ENCODE measurements at regions of chr10 and their contacts with region 1.

Region 1: DNA sequence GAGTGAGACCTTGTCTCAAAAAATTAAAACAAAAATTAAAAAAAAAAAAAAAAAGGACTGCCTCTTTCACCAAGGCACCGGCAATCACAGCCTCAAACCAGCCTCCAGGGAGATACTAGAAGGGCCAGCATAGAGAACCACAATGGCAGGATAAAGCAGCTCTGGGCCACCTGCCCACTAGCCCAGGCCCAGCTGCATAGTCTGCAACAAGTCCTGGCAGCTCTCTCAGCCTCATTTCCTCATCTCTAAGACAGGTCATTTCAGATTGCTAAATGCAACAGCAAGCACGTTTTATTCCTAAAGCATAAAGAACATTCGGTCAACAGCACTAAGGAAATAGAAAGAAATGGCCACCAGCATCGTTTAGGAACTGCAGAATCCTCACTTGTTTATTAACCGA is 28.8 kb downstream of the XPNPEP1 start:
- DNase-seq: no peak
- ATAC-seq: no peak
- H3K4me3 ChIP-seq: no peak overlapping the region
- H3K4me3 Mint-ChIP-seq: no peak overlapping the region
- H3K27ac ChIP-seq: no peak overlapping the region
- H3K27ac Mint-ChIP-seq: no peak overlapping the region
- H3K4me1 ChIP-seq: peaks cover 4% of the 10 kb centered on the region
- H3K4me1 Mint-ChIP-seq: peaks cover 56% of the 10 kb centered on the region
- H3K27me3 ChIP-seq: no peaks in the 10 kb centered on the region
- H3K27me3 Mint-ChIP-seq: no peaks in the 10 kb centered on the region
- CTCF ChIP-seq: no peak

Region 2: GRCh38 chr10:109934958-109935706 is 40.6 kb after region 1 on chr10:
- CTCF ChIA-PET with region 1: interaction called, 6 read pairs
- POLR2A ChIA-PET with region 1: interaction called, 3 read pairs
- intact Hi-C with region 1: loop called in 1 of 2 experiments (anchors 5 kb)
- DNase-seq: peak in 4 of 9 experiments; percentile 15 to 56 (median 36)
- ATAC-seq: peak; percentile 32
- H3K4me3 ChIP-seq: peak overlapping the region in 1 of 2 experiments; percentile 2
- H3K4me3 Mint-ChIP-seq: peak overlapping the region; percentile 77
- H3K27ac ChIP-seq: peak overlapping the region; percentile 33 to 70
- H3K27ac Mint-ChIP-seq: peak overlapping the region; percentile 96
- H3K4me1 ChIP-seq: peaks cover 68% of the 10 kb centered on the region
- H3K4me1 Mint-ChIP-seq: peaks cover 74% of the 10 kb centered on the region
- H3K27me3 ChIP-seq: no peaks in the 10 kb centered on the region
- H3K27me3 Mint-ChIP-seq: no peaks in the 10 kb centered on the region
- CTCF ChIP-seq: no peak

Region 3: GRCh38 chr10:110110338-110110737 is 215.8 kb after region 1 on chr10:
- CTCF ChIA-PET with region 1: no interaction called
- POLR2A ChIA-PET with region 1: no interaction called
- intact Hi-C with region 1: loop called in 1 of 2 experiments (anchors 5 kb)
- DNase-seq: peak in 2 of 9 experiments; percentile 7 to 14
- ATAC-seq: no peak
- H3K4me3 ChIP-seq: no peak overlapping the region
- H3K4me3 Mint-ChIP-seq: no peak overlapping the region
- H3K27ac ChIP-seq: no peak overlapping the region
- H3K27ac Mint-ChIP-seq: peak overlapping the region; percentile 84
- H3K4me1 ChIP-seq: no peaks in the 10 kb centered on the region
- H3K4me1 Mint-ChIP-seq: peaks cover 31% of the 10 kb centered on the region
- H3K27me3 ChIP-seq: no peaks in the 10 kb centered on the region
- H3K27me3 Mint-ChIP-seq: no peaks in the 10 kb centered on the region
- CTCF ChIP-seq: no peak